Activated naive CD4-positive, alpha-beta T cell treated with anti-CD3 and anti-CD28 coated beads for 36 hours (primary cell): ENCODE measurements at regions of chr21 and their contacts with region 1.

Region 1: GRCh38 chr21:42781150-42781970 is 98.0 kb downstream of the WDR4 start:
- DNase-seq: peak; percentile 26
- H3K4me3 Mint-ChIP-seq: peak overlapping the region; percentile 56
- H3K27ac Mint-ChIP-seq: no peak overlapping the region
- H3K4me1 Mint-ChIP-seq: peaks cover 41% of the 10 kb centered on the region
- H3K27me3 Mint-ChIP-seq: peaks cover 3% of the 10 kb centered on the region

Region 2: GRCh38 chr21:42684109-42684916 is 97.0 kb before region 1 on chr21:
- CTCF ChIA-PET with region 1: no interaction called
- intact Hi-C with region 1: loop called (anchors 10 kb)
- DNase-seq: peak; percentile 74
- H3K4me3 Mint-ChIP-seq: peak overlapping the region; percentile 65
- H3K27ac Mint-ChIP-seq: peak overlapping the region; percentile 81
- H3K4me1 Mint-ChIP-seq: peaks cover 46% of the 10 kb centered on the region
- H3K27me3 Mint-ChIP-seq: no peaks in the 10 kb centered on the region

Region 3: DNA sequence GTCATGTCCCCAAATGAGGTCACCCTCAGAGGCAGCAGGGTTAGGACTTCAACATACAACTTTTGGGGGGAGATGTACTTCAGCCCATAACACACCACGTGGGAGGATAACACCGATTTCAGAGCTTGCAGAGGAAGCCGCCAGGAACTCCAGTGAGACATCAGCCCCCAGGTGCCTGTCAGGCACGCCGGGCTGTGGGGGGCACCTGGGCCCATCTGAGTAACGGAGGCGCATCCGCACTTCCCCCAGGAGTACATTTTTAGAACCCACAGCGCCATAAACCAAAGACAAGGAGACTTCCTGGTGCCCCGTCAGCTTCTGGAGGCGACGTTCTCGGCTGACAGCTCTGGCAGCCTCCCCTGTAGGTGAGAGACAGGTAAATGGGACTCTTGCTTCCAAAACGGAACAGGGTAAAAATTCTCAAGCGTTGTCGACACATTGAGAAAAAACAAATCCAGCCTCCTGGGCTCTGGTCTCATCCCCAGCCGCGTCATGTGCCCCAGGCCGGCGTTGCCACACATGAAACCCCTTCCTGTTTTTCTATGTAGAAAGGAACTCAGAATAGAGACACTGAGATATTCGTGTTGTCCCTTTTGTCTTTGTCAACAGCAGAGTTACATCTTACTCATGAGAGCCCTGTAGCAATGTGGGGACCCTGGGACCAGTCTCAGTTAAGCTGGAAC is 34.6 kb before region 1 on chr21:
- CTCF ChIA-PET with region 1: no interaction called
- intact Hi-C with region 1: loop called (anchors 2 kb)
- DNase-seq: peak; percentile 57
- H3K4me3 Mint-ChIP-seq: peak overlapping the region; percentile 18
- H3K27ac Mint-ChIP-seq: peak overlapping the region; percentile 79
- H3K4me1 Mint-ChIP-seq: peaks cover 13% of the 10 kb centered on the region
- H3K27me3 Mint-ChIP-seq: no peaks in the 10 kb centered on the region